ENCODE measurements at regions of chr10 and their contacts with region 1.

Region 1: DNA sequence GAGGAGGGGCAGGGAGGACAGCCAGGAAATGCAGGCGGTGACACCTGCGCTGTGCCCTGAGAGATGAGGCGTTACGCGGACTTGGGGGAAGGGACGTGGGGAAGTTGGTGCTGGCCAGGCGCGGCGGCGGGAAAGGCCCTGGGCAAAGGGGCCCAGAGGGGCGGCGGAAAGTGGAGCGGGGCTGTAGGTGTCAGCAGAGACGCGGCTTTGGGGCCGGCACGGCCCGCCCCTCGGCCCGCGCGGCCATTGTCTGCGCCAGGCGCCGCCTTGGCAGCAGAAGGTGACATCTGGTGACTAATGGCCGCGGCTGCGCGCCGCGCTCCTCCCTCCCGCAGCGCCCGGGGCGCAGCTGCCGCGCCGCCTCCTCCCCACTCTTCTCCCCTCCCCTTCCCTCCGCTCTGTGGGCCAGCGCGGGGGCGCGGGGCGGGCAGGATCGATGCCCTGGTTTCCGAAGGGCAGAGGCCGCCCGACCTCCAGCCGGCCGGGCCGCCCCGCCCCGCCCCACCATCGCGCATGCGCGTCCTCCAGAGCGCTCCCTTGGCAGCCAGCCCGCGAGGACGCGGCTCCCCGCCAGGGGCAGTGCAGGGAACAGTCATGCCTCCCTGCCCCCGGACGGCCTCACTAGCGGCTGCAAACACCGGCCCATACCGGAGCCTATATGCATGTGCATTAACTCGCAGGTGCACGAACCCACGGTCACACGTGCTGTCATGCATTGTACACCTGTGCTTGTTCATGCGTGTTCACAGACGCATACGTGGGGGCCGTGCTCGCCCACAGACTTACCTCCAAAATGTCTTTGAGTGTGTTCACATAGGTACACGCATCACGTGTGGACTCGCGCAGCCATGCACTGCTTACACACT is 269.6 kb downstream of the RPS24 start:
- DNase-seq: peak; percentile 95
- H3K4me3 Mint-ChIP-seq: peak overlapping the region; percentile 82
- H3K27ac Mint-ChIP-seq: peak overlapping the region; percentile 84
- H3K4me1 Mint-ChIP-seq: peaks cover 14% of the 10 kb centered on the region
- H3K27me3 Mint-ChIP-seq: no peaks in the 10 kb centered on the region

Region 2: DNA sequence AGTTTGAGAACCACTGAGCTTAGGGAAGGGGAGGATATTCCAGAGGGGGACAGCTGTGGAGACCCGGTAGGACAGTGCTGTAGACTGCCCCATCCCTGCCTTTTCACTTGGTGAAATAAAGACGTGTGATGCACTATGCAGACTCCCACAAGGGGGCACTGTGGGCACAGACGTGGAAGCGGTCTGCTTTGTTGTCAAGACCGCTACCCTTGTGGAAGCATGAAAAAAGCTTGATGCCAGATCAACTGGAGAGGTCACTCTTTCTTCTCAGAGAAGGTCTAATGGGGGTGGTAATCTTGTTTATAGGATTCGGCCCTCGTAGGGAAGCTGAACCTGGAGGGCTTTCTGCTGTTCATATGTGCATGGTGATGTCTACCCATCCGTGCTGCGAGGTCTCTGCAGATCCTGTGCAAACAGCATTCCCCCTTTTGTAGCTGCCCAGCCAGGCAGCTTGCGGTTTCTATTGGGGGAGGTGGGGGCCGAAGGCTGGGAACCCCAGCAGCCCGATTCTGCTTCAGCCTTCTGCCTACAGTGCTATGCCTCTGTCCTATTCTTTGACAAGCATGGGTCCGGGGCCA is 255.8 kb before region 1 on chr10:
- CTCF ChIA-PET with region 1: interaction called, 18 read pairs
- intact Hi-C with region 1: loop called (anchors 2 kb)
- DNase-seq: peak; percentile 90
- H3K4me3 Mint-ChIP-seq: no peak overlapping the region
- H3K27ac Mint-ChIP-seq: no peak overlapping the region
- H3K4me1 Mint-ChIP-seq: peaks cover 26% of the 10 kb centered on the region
- H3K27me3 Mint-ChIP-seq: no peaks in the 10 kb centered on the region

Region 3: DNA sequence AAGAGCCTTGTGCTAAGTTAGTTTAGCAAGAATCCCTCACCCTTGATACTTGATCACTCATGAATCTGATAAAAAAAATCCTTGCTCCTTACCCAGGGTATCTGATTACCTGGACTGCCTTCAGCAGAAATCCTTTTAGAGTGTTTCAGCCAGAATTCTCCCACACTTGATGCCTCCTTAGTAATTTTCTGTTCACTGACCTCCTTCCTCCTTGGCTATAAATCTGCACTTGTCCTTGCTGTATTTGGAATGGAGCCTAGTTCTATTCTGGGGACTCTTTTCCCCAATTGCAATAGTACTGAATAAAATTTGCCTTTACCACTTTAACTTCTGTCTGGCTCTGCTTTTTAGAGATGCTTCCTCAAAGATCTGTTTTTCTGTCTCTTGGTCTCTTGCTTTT is 184.6 kb before region 1 on chr10:
- CTCF ChIA-PET with region 1: no interaction called
- intact Hi-C with region 1: no loop called
- DNase-seq: no peak
- H3K4me3 Mint-ChIP-seq: no peak overlapping the region
- H3K27ac Mint-ChIP-seq: no peak overlapping the region
- H3K4me1 Mint-ChIP-seq: no peaks in the 10 kb centered on the region
- H3K27me3 Mint-ChIP-seq: peaks cover 12% of the 10 kb centered on the region

Region 4: GRCh38 chr10:78255796-78256638 is 47.2 kb before region 1 on chr10:
- CTCF ChIA-PET with region 1: no interaction called
- intact Hi-C with region 1: no loop called
- DNase-seq: no peak
- H3K4me3 Mint-ChIP-seq: no peak overlapping the region
- H3K27ac Mint-ChIP-seq: no peak overlapping the region
- H3K4me1 Mint-ChIP-seq: no peaks in the 10 kb centered on the region
- H3K27me3 Mint-ChIP-seq: no peaks in the 10 kb centered on the region

Region 5: DNA sequence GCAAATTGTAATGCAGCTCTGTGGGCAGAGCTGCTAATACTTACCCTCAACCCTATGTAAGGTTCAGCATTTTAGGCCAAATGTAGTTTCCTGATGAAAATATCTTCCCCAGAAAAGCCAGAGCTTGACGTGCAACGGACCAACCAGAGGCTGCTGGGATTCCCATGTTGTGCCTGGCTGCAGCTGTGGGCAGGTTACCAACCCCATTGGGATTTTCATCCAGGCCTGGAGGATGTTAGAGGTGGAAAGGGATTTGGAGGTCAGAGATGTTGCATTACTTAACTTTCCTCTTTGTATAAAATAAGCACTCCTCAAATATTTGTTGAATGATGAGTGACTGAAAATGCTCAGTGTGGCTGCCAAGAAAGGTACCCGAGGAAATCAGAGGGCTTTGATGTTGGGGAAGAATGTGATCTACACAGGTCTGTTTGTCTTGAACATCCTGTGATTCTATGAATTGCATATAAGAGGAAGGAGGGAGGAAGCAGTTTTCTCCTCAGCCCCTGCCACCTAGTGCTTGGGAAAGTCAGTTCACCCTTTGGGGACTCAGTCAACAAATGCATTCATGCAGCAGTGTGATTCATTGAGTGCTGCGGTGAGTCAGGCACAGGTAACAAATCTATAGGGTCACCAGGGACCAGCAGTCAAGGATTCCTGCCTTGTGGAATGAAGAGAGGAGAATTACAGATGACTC is 217.7 kb after region 1 on chr10:
- CTCF ChIA-PET with region 1: no interaction called
- intact Hi-C with region 1: loop called (anchors 1 kb)
- DNase-seq: peak; percentile 61
- H3K4me3 Mint-ChIP-seq: no peak overlapping the region
- H3K27ac Mint-ChIP-seq: no peak overlapping the region
- H3K4me1 Mint-ChIP-seq: peaks cover 9% of the 10 kb centered on the region
- H3K27me3 Mint-ChIP-seq: no peaks in the 10 kb centered on the region

Region 6: DNA sequence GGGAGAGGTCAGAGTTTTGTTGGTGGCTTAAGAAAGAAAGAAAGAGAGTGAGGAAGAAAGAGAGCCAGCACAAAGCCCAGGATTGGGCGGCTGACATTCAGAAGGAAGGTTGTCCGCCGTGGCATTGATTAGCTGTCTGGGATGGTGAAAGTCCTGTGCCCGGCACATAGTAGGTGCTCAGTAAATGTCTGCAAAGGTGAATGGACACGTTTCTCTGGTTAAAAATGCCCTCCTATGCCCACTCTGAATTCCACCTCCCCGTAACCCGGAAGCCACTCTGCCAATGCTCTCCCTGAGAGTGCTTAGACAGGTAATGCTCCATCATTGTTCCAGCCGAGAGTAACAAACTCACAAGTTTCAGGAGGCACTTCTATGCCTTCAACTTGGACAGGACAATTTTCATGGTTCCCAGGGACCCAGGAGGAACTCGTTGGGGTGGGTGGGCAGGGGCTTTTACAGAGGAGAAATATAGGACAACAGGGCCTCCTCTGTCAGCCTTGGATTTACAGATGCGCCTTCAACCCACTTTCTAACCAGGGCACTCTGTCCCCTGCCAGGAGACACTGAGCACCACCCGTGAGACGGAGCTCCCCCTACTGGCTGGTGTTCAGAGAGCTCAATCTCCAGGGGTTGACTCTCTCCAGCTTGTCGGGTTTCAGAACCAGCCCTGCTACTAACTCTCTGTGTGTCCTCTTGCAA is 354.1 kb after region 1 on chr10:
- CTCF ChIA-PET with region 1: interaction called, 3 read pairs
- intact Hi-C with region 1: loop called (anchors 1 kb)
- DNase-seq: peak; percentile 85
- H3K4me3 Mint-ChIP-seq: no peak overlapping the region
- H3K27ac Mint-ChIP-seq: no peak overlapping the region
- H3K4me1 Mint-ChIP-seq: no peaks in the 10 kb centered on the region
- H3K27me3 Mint-ChIP-seq: peaks cover 9% of the 10 kb centered on the region

Region 7: GRCh38 chr10:78688901-78689583 is 385.8 kb after region 1 on chr10:
- CTCF ChIA-PET with region 1: no interaction called
- intact Hi-C with region 1: no loop called
- DNase-seq: no peak
- H3K4me3 Mint-ChIP-seq: no peak overlapping the region
- H3K27ac Mint-ChIP-seq: no peak overlapping the region
- H3K4me1 Mint-ChIP-seq: no peaks in the 10 kb centered on the region
- H3K27me3 Mint-ChIP-seq: no peaks in the 10 kb centered on the region

Region 8: GRCh38 chr10:78784546-78784945 is 481.3 kb after region 1 on chr10:
- CTCF ChIA-PET with region 1: no interaction called
- intact Hi-C with region 1: no loop called
- DNase-seq: no peak
- H3K4me3 Mint-ChIP-seq: no peak overlapping the region
- H3K27ac Mint-ChIP-seq: no peak overlapping the region
- H3K4me1 Mint-ChIP-seq: no peaks in the 10 kb centered on the region
- H3K27me3 Mint-ChIP-seq: peaks cover 10% of the 10 kb centered on the region

Region 9: GRCh38 chr10:79052291-79053080 is 749.3 kb after region 1 on chr10:
- CTCF ChIA-PET with region 1: no interaction called
- intact Hi-C with region 1: loop called (anchors 1 kb)
- DNase-seq: peak; percentile 35
- H3K4me3 Mint-ChIP-seq: no peak overlapping the region
- H3K27ac Mint-ChIP-seq: no peak overlapping the region
- H3K4me1 Mint-ChIP-seq: peaks cover 35% of the 10 kb centered on the region
- H3K27me3 Mint-ChIP-seq: no peaks in the 10 kb centered on the region

Region 10: GRCh38 chr10:79242620-79243152 is 939.5 kb after region 1 on chr10:
- CTCF ChIA-PET with region 1: no interaction called
- intact Hi-C with region 1: loop called (anchors 2 kb)
- DNase-seq: peak; percentile 69
- H3K4me3 Mint-ChIP-seq: peak overlapping the region; percentile 78
- H3K27ac Mint-ChIP-seq: peak overlapping the region; percentile 56
- H3K4me1 Mint-ChIP-seq: peaks cover 45% of the 10 kb centered on the region
- H3K27me3 Mint-ChIP-seq: no peaks in the 10 kb centered on the region

Region 11: GRCh38 chr10:79445141-79445976 is 1142.1 kb after region 1 on chr10 and contains the start of gene ZCCHC24:
- CTCF ChIA-PET with region 1: no interaction called
- intact Hi-C with region 1: loop called (anchors 1 kb)
- DNase-seq: peak; percentile 92
- H3K4me3 Mint-ChIP-seq: peak within 1 kb of the TSS; percentile 70
- H3K27ac Mint-ChIP-seq: no peak within 1 kb of the TSS
- H3K4me1 Mint-ChIP-seq: peaks cover 21% of the 10 kb centered on the region
- H3K27me3 Mint-ChIP-seq: peaks cover 12% of the 10 kb centered on the region
- total RNA-seq, gene ZCCHC24: 0.52 to 0.69 TPM

Measured in activated naive CD4-positive, alpha-beta T cell treated with anti-CD3 and anti-CD28 coated beads for 36 hours (primary cell).